PC-9 (cell line): ENCODE measurements at regions of chr1 and their contacts with region 1.

Region 1: GRCh38 chr1:65419681-65420589 is 533 bp upstream of the LEPR start:
- DNase-seq: peak; percentile 88 to 99
- H3K4me3 ChIP-seq: peak overlapping the region; percentile 59
- H3K27ac ChIP-seq: peak overlapping the region; percentile 90
- H3K4me1 ChIP-seq: peaks cover 55% of the 10 kb centered on the region
- H3K27me3 ChIP-seq: no peaks in the 10 kb centered on the region
- CTCF ChIP-seq: no peak

Region 2: DNA sequence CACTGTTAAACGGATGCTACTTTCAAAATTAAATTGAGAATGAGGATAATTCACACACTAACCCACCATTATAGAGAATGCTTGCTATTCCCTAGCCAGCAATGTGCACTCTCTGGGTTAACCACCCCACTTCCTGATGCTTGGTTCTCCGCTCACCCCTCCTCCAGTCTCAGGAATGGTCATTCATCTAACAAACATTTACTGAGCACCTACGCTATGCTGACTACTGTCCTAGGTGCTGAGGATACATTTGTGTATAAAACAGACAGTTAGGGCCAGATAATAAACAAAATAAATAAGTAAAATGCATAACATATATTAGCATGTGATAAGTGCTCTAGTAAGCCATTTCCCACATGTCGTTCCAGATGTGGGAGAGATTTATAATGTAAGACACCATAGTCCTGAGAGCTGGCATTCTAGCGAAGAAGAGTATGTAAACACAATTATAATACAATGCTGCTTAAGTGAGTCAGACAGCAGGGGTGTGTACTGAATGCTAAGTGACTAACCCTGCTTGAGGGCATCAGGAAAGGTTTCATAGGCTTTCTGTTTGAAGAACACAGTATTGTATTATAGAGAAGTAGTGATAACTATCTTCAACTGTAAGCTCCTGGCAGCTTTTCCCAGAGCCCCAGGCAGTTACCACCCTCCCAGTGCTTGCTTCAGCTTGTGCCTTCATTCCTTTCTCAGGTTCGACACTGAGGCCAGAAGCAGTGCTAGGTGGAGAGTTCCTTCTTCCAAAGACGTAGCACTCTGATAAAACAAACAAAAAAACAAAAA is 1076.6 kb before region 1 on chr1:
- CTCF ChIA-PET with region 1: no interaction called
- POLR2A ChIA-PET with region 1: no interaction called
- intact Hi-C with region 1: loop called (anchors 5 kb)
- DNase-seq: peak; percentile 91 to 99
- H3K4me3 ChIP-seq: peak overlapping the region; percentile 15; the same call in 1 of the 2 replicates
- H3K27ac ChIP-seq: peak overlapping the region; percentile 91
- H3K4me1 ChIP-seq: peaks cover 44% of the 10 kb centered on the region
- H3K27me3 ChIP-seq: no peaks in the 10 kb centered on the region
- CTCF ChIP-seq: no peak

Region 3: DNA sequence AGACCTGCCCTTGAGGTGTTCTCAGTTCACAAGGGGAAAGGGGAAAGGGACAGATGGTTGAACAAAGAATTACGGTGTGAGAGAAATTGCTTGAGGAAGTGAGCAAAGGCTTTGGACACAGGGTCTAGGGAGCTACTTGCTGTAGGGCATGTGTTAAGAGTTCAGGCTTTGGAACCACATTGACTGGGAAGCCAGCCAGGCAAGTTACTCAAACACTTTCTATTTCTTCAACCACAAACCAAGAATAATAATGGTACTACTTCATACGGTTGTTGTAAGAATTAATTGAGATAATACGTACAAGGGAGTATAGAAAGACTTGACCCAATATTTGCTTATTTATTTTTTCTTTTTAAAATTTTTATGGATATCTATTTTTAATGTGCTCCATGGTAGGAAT is 245.3 kb before region 1 on chr1:
- CTCF ChIA-PET with region 1: no interaction called
- POLR2A ChIA-PET with region 1: no interaction called
- intact Hi-C with region 1: loop called (anchors 2 kb)
- DNase-seq: peak; percentile 74 to 98
- H3K4me3 ChIP-seq: no peak overlapping the region
- H3K27ac ChIP-seq: peak overlapping the region; percentile 81
- H3K4me1 ChIP-seq: peaks cover 83% of the 10 kb centered on the region
- H3K27me3 ChIP-seq: no peaks in the 10 kb centered on the region
- CTCF ChIP-seq: no peak

Region 4: DNA sequence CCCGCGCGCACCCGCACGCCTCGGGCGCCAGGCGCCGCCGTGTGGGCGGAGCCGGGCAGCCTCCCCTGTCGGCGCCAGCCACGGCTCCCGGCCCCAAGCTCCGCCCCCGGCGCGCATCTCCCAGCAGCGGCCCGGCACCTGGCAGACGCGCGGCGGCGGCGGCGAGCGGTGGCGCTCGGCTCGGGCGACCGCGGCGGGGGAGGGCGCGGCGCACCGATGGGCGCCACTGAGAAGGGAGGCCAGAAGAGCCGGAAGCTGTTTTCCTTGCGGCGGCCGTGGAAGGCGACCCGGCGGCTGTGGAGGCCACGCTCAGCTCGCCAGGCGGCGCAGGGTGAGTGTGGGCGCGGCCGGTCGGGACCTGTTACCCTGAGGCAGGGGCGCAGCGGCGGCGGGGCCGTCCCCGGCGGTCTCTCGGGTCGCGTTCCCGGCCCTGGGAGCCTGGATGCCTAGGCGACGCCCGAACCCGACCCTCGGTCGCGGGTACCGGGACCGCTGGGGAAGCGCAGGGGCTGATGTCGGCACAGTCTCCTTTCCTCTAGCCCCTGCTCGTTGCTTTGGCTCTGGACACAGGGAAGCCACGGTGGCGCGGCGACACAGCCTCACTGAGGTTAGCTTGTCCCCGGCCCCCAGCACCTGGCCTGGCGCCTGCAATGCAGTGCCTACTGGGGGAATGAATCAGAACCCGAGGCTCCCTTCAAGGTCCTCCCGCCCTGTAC is 165.5 kb before region 1 on chr1:
- CTCF ChIA-PET with region 1: interaction called, 9 read pairs
- POLR2A ChIA-PET with region 1: interaction called, 11 read pairs
- intact Hi-C with region 1: loop called (anchors 1 kb)
- DNase-seq: peak; percentile 61 to 88
- H3K4me3 ChIP-seq: peak overlapping the region; percentile 70
- H3K27ac ChIP-seq: 0 out of 2 replicates have a peak overlapping the region, but pooled peaks have one; percentile 10
- H3K4me1 ChIP-seq: peaks cover 11% of the 10 kb centered on the region; the same call in 1 of the 2 replicates
- H3K27me3 ChIP-seq: no peaks in the 10 kb centered on the region
- CTCF ChIP-seq: no peak

Region 5: GRCh38 chr1:65449214-65449842 is 29.4 kb after region 1 on chr1:
- CTCF ChIA-PET with region 1: no interaction called
- POLR2A ChIA-PET with region 1: interaction called, 22 read pairs
- intact Hi-C with region 1: no loop called
- DNase-seq: no peak
- H3K4me3 ChIP-seq: no peak overlapping the region
- H3K27ac ChIP-seq: no peak overlapping the region
- H3K4me1 ChIP-seq: no peaks in the 10 kb centered on the region
- H3K27me3 ChIP-seq: no peaks in the 10 kb centered on the region
- CTCF ChIP-seq: peak; percentile 46; the same call in 1 of the 2 replicates

Region 6: GRCh38 chr1:65572701-65573421 is 152.9 kb after region 1 on chr1:
- CTCF ChIA-PET with region 1: no interaction called
- POLR2A ChIA-PET with region 1: interaction called, 27 read pairs
- intact Hi-C with region 1: no loop called
- DNase-seq: no peak
- H3K4me3 ChIP-seq: no peak overlapping the region
- H3K27ac ChIP-seq: no peak overlapping the region
- H3K4me1 ChIP-seq: no peaks in the 10 kb centered on the region
- H3K27me3 ChIP-seq: no peaks in the 10 kb centered on the region
- CTCF ChIP-seq: no peak